Activated B cell treated with CpG ODN at 0.5 μM for 24 hours (primary cell): ENCODE measurements at regions of chr4 and their contacts with region 1.

Region 1: GRCh38 chr4:151408630-151409469 is at the start of gene FHIP1A:
- DNase-seq: peak; percentile 63
- ATAC-seq: peak; percentile 88
- H3K4me3 Mint-ChIP-seq: peak within 1 kb of the TSS; percentile 86
- H3K27ac Mint-ChIP-seq: peak within 1 kb of the TSS; percentile 35
- H3K4me1 Mint-ChIP-seq: peaks cover 24% of the 10 kb centered on the region
- H3K27me3 Mint-ChIP-seq: peaks cover 34% of the 10 kb centered on the region
- CTCF ChIP-seq: no peak
- total RNA-seq, gene FHIP1A: 0.04 and 0.07 TPM in 2 replicates

Region 2: DNA sequence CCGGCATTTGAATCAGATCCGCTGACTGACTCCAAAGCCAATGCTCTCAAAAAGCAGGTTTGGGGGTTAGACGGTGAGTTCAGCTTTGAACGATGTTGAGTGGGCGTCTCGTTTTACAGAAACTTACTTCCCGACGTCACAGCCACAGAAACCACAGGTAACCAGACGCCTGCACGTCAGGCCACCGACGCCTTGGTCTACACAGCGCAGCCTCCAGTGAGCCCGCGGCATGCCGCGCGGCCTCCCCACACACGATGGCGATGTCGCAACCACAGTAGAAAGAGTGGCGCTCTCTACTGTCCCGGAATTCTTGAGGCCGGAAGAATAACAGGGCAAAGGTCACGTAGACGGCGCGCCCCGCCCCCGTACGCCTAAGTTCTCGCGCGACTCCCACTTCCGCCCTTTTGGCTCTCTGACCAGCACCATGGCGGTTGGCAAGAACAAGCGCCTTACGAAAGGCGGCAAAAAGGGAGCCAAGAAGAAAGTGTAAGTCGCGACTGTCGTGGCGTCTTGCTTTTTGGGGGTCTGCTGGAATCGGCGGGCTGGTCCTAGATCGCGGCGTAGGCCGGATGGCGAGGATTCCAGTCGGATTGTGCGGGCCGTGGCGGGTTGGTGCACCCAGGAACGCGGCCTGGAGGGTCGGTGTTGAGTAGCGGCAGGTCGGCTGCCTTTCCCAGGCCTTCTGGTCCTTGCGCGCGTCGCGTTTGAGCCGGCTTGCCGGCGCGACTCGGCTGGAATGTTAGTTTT is 309.4 kb before region 1 on chr4 and contains the start of gene RPS3A:
- CTCF ChIA-PET with region 1: no interaction called
- POLR2A ChIA-PET with region 1: no interaction called
- intact Hi-C with region 1: loop called (anchors 5 kb)
- DNase-seq: peak; percentile 99
- ATAC-seq: peak; percentile 94
- H3K4me3 Mint-ChIP-seq: peak within 1 kb of the TSS; percentile 99
- H3K27ac Mint-ChIP-seq: peak within 1 kb of the TSS; percentile 98
- H3K4me1 Mint-ChIP-seq: peaks cover 40% of the 10 kb centered on the region
- H3K27me3 Mint-ChIP-seq: peaks cover 4% of the 10 kb centered on the region
- CTCF ChIP-seq: peak; percentile 88
- total RNA-seq, gene RPS3A: 3,089 and 3,656 TPM in 2 replicates

Region 3: DNA sequence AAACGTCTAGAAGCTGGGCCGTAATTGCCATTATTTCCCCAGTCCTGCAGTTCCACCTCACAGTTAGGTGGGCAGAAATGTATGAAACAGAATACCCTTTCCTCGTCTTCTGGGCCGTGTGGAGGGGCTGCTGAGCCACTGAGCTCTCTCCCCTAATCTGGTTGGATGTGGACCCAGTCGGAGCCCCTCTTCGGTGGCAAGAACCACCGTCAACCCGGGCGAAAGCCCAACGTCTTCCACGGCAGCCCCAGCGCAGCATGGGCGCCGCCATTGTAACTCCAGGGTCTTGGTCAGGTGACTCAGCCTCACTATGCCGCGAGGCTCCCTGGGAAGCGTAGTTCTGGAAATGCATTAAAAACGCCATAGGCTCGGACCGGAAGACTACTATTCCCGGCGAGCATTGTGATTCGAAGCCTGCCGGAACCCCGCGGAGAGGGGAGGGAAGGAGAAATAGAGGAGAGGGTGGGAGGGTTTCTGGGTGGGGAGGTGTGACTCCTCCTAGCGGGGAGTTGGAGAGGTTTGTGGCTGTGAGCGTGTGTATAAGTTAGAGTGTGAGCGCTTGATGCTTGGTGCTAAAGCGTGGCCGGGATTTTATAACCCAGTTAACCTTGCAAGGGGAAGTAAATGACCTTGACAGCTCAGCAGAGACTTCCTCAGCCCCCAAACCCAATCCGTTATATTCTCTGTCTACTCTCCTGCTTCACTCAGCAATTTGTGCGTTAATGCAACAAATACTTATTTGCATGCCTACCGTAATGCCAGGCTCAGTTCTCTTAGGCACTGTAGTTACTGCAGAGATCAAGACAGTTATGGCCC is 352.1 kb after region 1 on chr4 and contains the start of gene GATB:
- CTCF ChIA-PET with region 1: no interaction called
- POLR2A ChIA-PET with region 1: no interaction called
- intact Hi-C with region 1: loop called (anchors 2 kb)
- DNase-seq: peak; percentile 76
- ATAC-seq: peak; percentile 98
- H3K4me3 Mint-ChIP-seq: peak within 1 kb of the TSS; percentile 100
- H3K27ac Mint-ChIP-seq: peak within 1 kb of the TSS; percentile 98
- H3K4me1 Mint-ChIP-seq: peaks cover 13% of the 10 kb centered on the region
- H3K27me3 Mint-ChIP-seq: peaks cover 6% of the 10 kb centered on the region
- CTCF ChIP-seq: no peak
- total RNA-seq, gene GATB: 22.1 and 22.9 TPM in 2 replicates